CD4-positive, alpha-beta T cell (primary cell): ENCODE measurements at regions of chr7 and their contacts with region 1.

Region 1: DNA sequence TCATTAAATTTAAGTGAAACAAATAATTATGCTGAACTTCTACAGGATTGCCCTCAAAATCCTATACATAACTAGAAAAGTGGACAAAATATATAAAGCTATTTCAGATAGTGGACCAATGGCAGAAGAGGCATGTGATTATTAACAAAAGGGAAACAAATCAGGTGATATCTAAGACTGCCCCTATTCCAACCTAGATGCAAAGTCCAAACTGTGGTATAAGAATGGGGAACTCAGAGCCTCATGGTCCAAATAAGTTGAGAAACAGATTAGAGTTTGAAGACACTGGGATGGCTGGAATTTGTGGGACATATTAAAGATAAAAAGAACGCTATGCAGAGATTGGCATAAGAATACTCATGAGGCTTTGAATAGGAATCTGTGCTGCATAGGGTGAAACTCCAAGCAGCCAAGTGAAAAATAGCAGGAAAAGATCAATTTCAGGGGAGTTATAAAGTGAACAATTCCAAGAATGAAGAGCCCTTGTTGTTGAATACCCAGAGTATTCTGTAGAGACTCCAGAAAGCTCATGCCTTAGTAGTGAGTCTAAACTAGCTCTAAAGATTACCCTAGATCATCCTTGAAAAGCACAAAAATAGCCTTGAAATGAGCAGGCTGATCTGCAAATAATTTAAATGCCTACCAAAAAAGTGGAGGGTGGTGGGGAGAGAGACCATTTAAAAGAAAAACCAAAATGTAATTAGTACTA is 152.4 kb downstream of the IMMP2L start:
- DNase-seq: no peak
- ATAC-seq: no peak
- H3K4me3 ChIP-seq: no peak overlapping the region
- H3K4me3 Mint-ChIP-seq: no peak overlapping the region
- H3K27ac ChIP-seq: no peak overlapping the region
- H3K27ac Mint-ChIP-seq: no peak overlapping the region
- H3K4me1 ChIP-seq: no peaks in the 10 kb centered on the region
- H3K4me1 Mint-ChIP-seq: no peaks in the 10 kb centered on the region
- H3K27me3 ChIP-seq: no peaks in the 10 kb centered on the region
- H3K27me3 Mint-ChIP-seq: no peaks in the 10 kb centered on the region
- CTCF ChIP-seq: no peak

Region 2: DNA sequence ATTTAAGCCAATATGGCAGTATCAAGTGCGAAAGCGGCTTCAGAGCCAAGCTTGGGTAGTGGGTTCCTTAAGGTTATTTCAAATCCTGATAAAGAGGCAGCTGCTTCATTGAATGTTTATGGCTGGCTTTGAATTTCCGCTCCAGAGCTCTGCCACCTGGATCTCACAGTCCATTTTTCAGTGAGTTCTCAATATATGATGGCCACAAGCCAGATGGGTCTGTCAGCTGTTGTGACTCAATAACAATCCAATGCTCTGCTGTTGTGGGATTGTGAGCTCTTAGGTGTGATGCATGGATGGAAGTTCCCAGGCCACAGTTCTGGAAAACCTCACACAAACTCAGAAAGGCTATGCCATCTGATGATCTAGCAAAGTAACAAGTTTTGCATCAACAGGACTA is 1062.8 kb before region 1 on chr7:
- CTCF ChIA-PET with region 1: no interaction called
- POLR2A ChIA-PET with region 1: no interaction called
- intact Hi-C with region 1: no loop called
- DNase-seq: no peak
- ATAC-seq: no peak
- H3K4me3 ChIP-seq: no peak overlapping the region
- H3K4me3 Mint-ChIP-seq: no peak overlapping the region
- H3K27ac ChIP-seq: no peak overlapping the region
- H3K27ac Mint-ChIP-seq: no peak overlapping the region
- H3K4me1 ChIP-seq: no peaks in the 10 kb centered on the region
- H3K4me1 Mint-ChIP-seq: no peaks in the 10 kb centered on the region
- H3K27me3 ChIP-seq: no peaks in the 10 kb centered on the region
- H3K27me3 Mint-ChIP-seq: no peaks in the 10 kb centered on the region
- CTCF ChIP-seq: no peak

Region 3: GRCh38 chr7:111439977-111440376 is 30.1 kb after region 1 on chr7:
- CTCF ChIA-PET with region 1: no interaction called
- POLR2A ChIA-PET with region 1: no interaction called
- intact Hi-C with region 1: loop called (anchors 1 to 5 kb)
- DNase-seq: no peak
- ATAC-seq: no peak
- H3K4me3 ChIP-seq: no peak overlapping the region
- H3K4me3 Mint-ChIP-seq: no peak overlapping the region
- H3K27ac ChIP-seq: no peak overlapping the region
- H3K27ac Mint-ChIP-seq: no peak overlapping the region
- H3K4me1 ChIP-seq: no peaks in the 10 kb centered on the region
- H3K4me1 Mint-ChIP-seq: no peaks in the 10 kb centered on the region
- H3K27me3 ChIP-seq: no peaks in the 10 kb centered on the region
- H3K27me3 Mint-ChIP-seq: no peaks in the 10 kb centered on the region
- CTCF ChIP-seq: no peak

Region 4: GRCh38 chr7:111752022-111752582 is 342.2 kb after region 1 on chr7:
- CTCF ChIA-PET with region 1: no interaction called
- POLR2A ChIA-PET with region 1: no interaction called
- intact Hi-C with region 1: no loop called
- DNase-seq: peak; percentile 12 to 69 (median 40)
- ATAC-seq: peak; percentile 44
- H3K4me3 ChIP-seq: no peak overlapping the region
- H3K4me3 Mint-ChIP-seq: no peak overlapping the region
- H3K27ac ChIP-seq: no peak overlapping the region
- H3K27ac Mint-ChIP-seq: no peak overlapping the region
- H3K4me1 ChIP-seq: no peaks in the 10 kb centered on the region
- H3K4me1 Mint-ChIP-seq: no peaks in the 10 kb centered on the region
- H3K27me3 ChIP-seq: no peaks in the 10 kb centered on the region
- H3K27me3 Mint-ChIP-seq: peaks cover 20% of the 10 kb centered on the region
- CTCF ChIP-seq: peak; percentile 57